GM13976 (cell line): ENCODE measurements at regions of chr6 and their contacts with region 1.

Region 1: DNA sequence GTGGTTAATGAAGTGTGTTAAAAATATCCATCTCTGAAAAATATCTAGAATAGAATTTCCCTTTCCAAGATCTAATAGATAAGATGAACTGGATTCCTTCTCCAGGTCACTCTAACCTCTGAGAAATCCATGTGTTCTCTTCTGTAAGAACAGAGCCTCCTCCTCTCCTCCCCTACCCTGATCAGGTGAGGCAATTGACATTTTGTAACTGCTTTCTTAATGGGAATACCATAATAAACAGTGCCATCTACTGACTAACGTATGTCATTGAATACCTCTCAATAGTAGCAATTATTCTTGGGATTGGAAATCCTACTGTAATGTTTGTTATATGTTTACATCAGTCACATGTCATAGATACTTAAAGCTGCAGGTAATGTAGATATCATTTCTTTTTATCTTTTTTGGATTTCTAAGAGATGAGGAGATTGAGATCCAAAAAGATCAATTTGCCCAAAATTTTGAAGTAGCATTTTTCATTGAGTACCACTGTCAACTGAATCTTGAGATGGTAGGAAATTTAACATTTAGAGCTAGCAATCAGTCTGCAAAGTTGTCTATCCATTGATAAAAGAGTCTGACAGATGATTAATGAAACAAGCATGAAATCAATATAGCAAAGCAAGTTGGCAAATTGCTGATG is 365.8 kb upstream of the HSF2 start:
- DNase-seq: peak; percentile 19
- CTCF ChIP-seq: peak; percentile 42

Region 2: DNA sequence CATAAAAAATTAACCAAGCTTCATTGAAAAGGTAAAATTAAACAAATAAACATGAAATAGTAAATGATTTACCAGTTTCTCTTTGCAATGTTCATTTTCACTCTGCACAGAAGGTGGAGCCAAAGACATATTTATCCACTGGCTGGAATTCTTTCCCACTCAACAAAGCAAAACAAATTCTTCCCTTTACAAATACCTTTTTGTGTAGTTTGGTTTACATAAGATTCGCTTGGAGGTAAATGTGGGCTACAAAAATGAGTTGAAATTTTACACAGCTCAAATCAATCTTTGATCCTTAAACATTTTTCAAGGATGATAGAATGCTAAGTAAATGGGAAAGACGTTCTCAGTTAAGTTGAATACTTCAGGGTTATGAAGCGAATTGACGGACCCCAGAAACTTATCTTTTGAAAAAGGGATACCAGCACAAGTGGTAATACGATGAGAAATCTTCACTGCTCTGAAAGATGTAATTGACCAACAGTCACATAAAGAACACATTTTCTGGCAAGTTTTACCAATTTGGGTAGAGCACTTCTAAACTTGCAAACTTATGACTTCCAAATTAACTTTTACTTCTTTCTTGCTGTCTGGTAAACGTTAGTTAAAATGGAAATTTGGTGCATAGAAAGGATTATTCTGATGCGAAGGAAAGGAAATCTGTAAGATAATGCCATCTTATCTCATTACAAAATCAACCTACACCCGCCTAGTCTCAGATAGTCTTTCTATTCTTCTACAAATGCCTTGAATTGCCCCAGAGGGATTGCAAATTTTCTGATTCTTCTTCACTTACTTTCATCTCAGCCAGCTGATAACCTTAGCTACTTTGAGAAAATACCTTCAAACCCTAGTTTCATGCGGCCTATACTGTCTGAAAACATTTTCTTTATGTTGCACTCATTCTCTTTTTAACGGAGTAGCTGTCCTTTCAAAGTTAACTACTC is 602.9 kb before region 1 on chr6:
- in situ Hi-C with region 1: loop called (anchors 25 kb)
- DNase-seq: no peak
- CTCF ChIP-seq: peak; percentile 12